Pancreas (tissue), 10 donors: ENCODE measurements at regions of chr7 and their contacts with region 1.

Region 1: GRCh38 chr7:12686894-12687717 is at the start of gene ARL4A:
- DNase-seq: peak; percentile 94 to 99 (median 98)
- ATAC-seq: peak; percentile 88 to 95 (median 92)
- H3K4me3 ChIP-seq: peak within 1 kb of the TSS; percentile 86 to 95 (median 88)
- H3K27ac ChIP-seq: peak within 1 kb of the TSS; percentile 84 to 98 (median 94)
- H3K4me1 ChIP-seq: peaks cover 0 to 3% (median 0%) of the 10 kb centered on the region in 3 donors
- H3K27me3 ChIP-seq: no peaks in the 10 kb centered on the region
- CTCF ChIP-seq: peak in 1 of 4 donors; percentile 28
- total RNA-seq, gene ARL4A: 1.9 to 7.3 (median 4.2) TPM

Region 2: GRCh38 chr7:12220389-12221046 is 466.6 kb before region 1 on chr7:
- intact Hi-C with region 1: no loop called
- DNase-seq: no peak
- ATAC-seq: no peak
- H3K4me3 ChIP-seq: no peak overlapping the region
- H3K27ac ChIP-seq: no peak overlapping the region
- H3K4me1 ChIP-seq: peaks cover 0 to 10% (median 0%) of the 10 kb centered on the region in 3 donors
- H3K27me3 ChIP-seq: no peaks in the 10 kb centered on the region
- CTCF ChIP-seq: no peak

Region 3: DNA sequence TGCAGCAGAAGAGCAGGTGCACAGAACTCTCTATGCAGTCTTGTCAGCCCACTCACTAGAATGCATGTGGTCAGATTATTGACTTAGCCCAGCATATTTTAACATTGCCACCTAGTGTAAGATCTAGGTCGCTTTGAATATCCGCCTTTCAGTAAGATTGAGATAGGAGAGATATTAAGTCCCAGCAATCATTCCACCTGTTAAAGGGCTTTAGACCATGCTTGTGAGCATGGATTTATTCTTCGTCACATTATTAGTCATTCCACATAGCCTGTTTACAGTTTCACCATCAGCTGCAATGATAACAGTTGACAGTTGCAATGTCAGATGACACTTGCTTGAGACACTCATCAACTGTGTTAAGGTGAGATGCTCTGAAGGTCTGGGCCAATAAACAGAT is 492.0 kb after region 1 on chr7:
- intact Hi-C with region 1: loop called in 1 of 3 experiments (anchors 10 kb)
- DNase-seq: no peak
- ATAC-seq: peak in 3 of 4 donors; percentile 72 to 89 (median 74)
- H3K4me3 ChIP-seq: no peak overlapping the region
- H3K27ac ChIP-seq: no peak overlapping the region
- H3K4me1 ChIP-seq: no peaks in the 10 kb centered on the region
- H3K27me3 ChIP-seq: no peaks in the 10 kb centered on the region
- CTCF ChIP-seq: peak in 1 of 4 donors; percentile 21